ENCODE measurements at regions of chr1 and their contacts with region 1.

Region 1: GRCh38 chr1:201739492-201740085 is 89.4 kb upstream of the IPO9 start:
- DNase-seq: peak; percentile 70 to 82 (median 78)
- ATAC-seq: peak; percentile 34 to 75 (median 70)
- H3K4me3 ChIP-seq: peak overlapping the region; percentile 70 to 92 (median 81)
- H3K27ac ChIP-seq: peak overlapping the region; percentile 81 to 98 (median 89)
- H3K4me1 ChIP-seq: peaks cover 19 to 95% (median 72%) of the 10 kb centered on the region in 12 donors
- H3K27me3 ChIP-seq: no peaks in the 10 kb centered on the region
- CTCF ChIP-seq: peak in 1 of 12 donors; percentile 9
- POLR2A ChIP-seq: no peak

Region 2: GRCh38 chr1:201562659-201563405 is 176.8 kb before region 1 on chr1:
- intact Hi-C with region 1: no loop called
- DNase-seq: peak in 1 of 5 donors; percentile 63
- ATAC-seq: peak in 3 of 4 donors; percentile 63 to 70 (median 70)
- H3K4me3 ChIP-seq: peak overlapping the region in 1 of 12 donors; percentile 4
- H3K27ac ChIP-seq: peak overlapping the region in 9 of 12 donors; percentile 17 to 69 (median 55)
- H3K4me1 ChIP-seq: peaks cover 24 to 94% (median 65%) of the 10 kb centered on the region in 12 donors
- H3K27me3 ChIP-seq: no peaks in the 10 kb centered on the region
- CTCF ChIP-seq: no peak
- POLR2A ChIP-seq: no peak

Region 3: DNA sequence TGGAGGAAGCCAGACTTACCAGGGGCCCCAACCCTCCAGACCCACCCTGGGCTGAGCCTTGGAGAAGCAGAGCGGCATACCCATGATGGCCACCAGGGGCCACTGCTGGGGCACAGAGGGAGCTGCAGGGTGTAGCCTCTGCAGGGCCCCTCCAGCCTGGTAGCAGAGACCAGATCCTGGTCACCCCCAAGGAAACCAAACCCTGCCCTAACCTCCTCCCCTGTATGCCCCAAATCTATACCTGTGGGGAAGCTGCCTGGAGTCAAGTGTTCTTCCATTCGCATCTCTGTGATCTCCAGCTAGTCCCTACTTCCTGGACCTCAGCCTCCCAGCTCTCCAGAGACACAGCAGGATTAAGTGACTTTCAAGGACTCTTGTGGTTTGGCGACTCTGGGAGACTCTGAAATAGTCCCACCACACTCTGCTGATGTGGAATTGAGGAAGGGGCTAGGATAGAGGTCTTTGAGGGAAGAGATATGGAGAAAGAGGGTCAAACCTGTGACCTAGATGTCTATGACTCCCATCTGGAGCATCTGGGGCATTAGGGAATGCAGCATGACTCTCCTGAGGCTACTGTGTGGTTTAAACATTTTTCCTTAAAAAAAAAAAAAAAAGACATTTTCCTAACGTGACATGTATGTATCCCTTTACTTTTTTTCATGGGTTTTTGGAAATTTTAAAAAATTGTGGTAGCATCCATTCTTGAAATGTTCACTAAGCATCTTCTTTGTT is 29.9 kb before region 1 on chr1:
- intact Hi-C with region 1: loop called in 2 of 10 experiments (anchors 1 to 5 kb)
- DNase-seq: peak; percentile 78 to 91 (median 80)
- ATAC-seq: peak; percentile 40 to 63 (median 54)
- H3K4me3 ChIP-seq: no peak overlapping the region
- H3K27ac ChIP-seq: peak overlapping the region in 11 of 12 donors; percentile 2 to 98 (median 91)
- H3K4me1 ChIP-seq: peaks cover 21 to 76% (median 60%) of the 10 kb centered on the region in 12 donors
- H3K27me3 ChIP-seq: no peaks in the 10 kb centered on the region
- CTCF ChIP-seq: peak; percentile 93 to 99 (median 97)
- POLR2A ChIP-seq: peak in 1 of 2 donors; percentile 8

Region 4: GRCh38 chr1:201719812-201720521 is 19.6 kb before region 1 on chr1:
- intact Hi-C with region 1: loop called in 1 of 10 experiments (anchors 2 kb)
- DNase-seq: peak; percentile 74 to 88 (median 86)
- ATAC-seq: peak; percentile 26 to 75 (median 60)
- H3K4me3 ChIP-seq: no peak overlapping the region
- H3K27ac ChIP-seq: peak overlapping the region; percentile 54 to 98 (median 82)
- H3K4me1 ChIP-seq: peaks cover 15 to 100% (median 86%) of the 10 kb centered on the region in 12 donors
- H3K27me3 ChIP-seq: no peaks in the 10 kb centered on the region
- CTCF ChIP-seq: no peak
- POLR2A ChIP-seq: peak in 1 of 2 donors; percentile 42

Region 5: DNA sequence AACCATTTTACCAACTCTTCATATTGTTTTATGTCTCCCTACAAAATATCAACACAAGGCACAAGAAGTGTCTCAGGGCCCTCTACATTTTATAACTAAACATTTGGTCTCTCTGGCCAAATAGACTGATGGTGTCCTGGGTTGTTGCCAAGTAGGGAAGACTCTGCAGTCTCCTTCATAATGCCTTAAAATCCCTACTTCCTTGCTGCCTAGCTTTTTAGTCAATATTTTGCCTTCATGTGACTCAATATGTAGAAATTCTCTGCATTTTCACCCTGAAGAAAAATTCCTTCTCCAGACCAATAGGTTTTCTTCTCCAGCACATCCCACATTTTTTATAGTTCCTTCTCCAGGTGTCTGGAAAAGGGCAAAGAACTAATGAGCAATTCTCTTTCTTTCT is 16.8 kb after region 1 on chr1:
- intact Hi-C with region 1: loop called in 1 of 10 experiments (anchors 2 kb)
- DNase-seq: no peak
- ATAC-seq: no peak
- H3K4me3 ChIP-seq: no peak overlapping the region
- H3K27ac ChIP-seq: peak overlapping the region in 5 of 12 donors; percentile 4 to 50 (median 9)
- H3K4me1 ChIP-seq: peaks cover 15 to 100% (median 93%) of the 10 kb centered on the region in 12 donors
- H3K27me3 ChIP-seq: no peaks in the 10 kb centered on the region
- CTCF ChIP-seq: no peak
- POLR2A ChIP-seq: no peak

Region 6: GRCh38 chr1:201786824-201787223 is 47.2 kb after region 1 on chr1:
- intact Hi-C with region 1: loop called in 5 of 10 experiments (anchors 2 to 5 kb)
- DNase-seq: peak; percentile 48 to 84 (median 68)
- ATAC-seq: peak; percentile 69 to 89 (median 74)
- H3K4me3 ChIP-seq: no peak overlapping the region
- H3K27ac ChIP-seq: peak overlapping the region; percentile 34 to 79 (median 62)
- H3K4me1 ChIP-seq: peaks cover 14 to 77% (median 49%) of the 10 kb centered on the region in 12 donors
- H3K27me3 ChIP-seq: no peaks in the 10 kb centered on the region
- CTCF ChIP-seq: no peak
- POLR2A ChIP-seq: no peak

Measured in heart left ventricle (tissue), 16 donors.